ENCODE measurements at regions of chr11 and their contacts with region 1.

Region 1: GRCh38 chr11:35838071-35838470 is 105.8 kb upstream of the LDLRAD3 start:
- DNase-seq: no peak
- CTCF ChIP-seq: no peak

Region 2: GRCh38 chr11:36326524-36327419 is 488.7 kb after region 1 on chr11:
- CTCF ChIA-PET with region 1: no interaction called
- POLR2A ChIA-PET with region 1: interaction called, 10 read pairs
- DNase-seq: peak; percentile 20
- CTCF ChIP-seq: no peak